ENCODE measurements at regions of chr13 and their contacts with region 1.

Region 1: GRCh38 chr13:25114220-25114619 is 18.3 kb downstream of the PABPC3 start:
- DNase-seq: peak; percentile 37 to 65
- ATAC-seq: peak; percentile 92 to 95
- H3K4me3 ChIP-seq: no peak overlapping the region
- H3K27ac ChIP-seq: no peak overlapping the region
- H3K4me1 ChIP-seq: no peaks in the 10 kb centered on the region
- CTCF ChIP-seq: peak; percentile 64
- EP300 ChIP-seq: no peak
- POLR2A ChIP-seq: no peak
- RAD21 ChIP-seq: peak; percentile 56 to 63

Region 2: GRCh38 chr13:24851545-24851944 is 262.7 kb before region 1 on chr13:
- CTCF ChIA-PET with region 1: no interaction called
- POLR2A ChIA-PET with region 1: no interaction called
- DNase-seq: no peak
- ATAC-seq: no peak
- H3K4me3 ChIP-seq: no peak overlapping the region
- H3K27ac ChIP-seq: no peak overlapping the region
- H3K4me1 ChIP-seq: no peaks in the 10 kb centered on the region
- CTCF ChIP-seq: no peak
- EP300 ChIP-seq: no peak
- POLR2A ChIP-seq: no peak
- RAD21 ChIP-seq: no peak

Region 3: GRCh38 chr13:24995226-24995804 is 118.9 kb before region 1 on chr13:
- CTCF ChIA-PET with region 1: interaction called, 17 read pairs
- POLR2A ChIA-PET with region 1: no interaction called
- DNase-seq: peak; percentile 56 to 85
- ATAC-seq: peak; percentile 87 to 98
- H3K4me3 ChIP-seq: no peak overlapping the region
- H3K27ac ChIP-seq: no peak overlapping the region
- H3K4me1 ChIP-seq: no peaks in the 10 kb centered on the region
- CTCF ChIP-seq: peak; percentile 66
- EP300 ChIP-seq: no peak
- POLR2A ChIP-seq: no peak
- RAD21 ChIP-seq: peak; percentile 61 to 73

Region 4: GRCh38 chr13:25001476-25002206 is 112.6 kb before region 1 on chr13:
- CTCF ChIA-PET with region 1: interaction called, 14 read pairs
- POLR2A ChIA-PET with region 1: no interaction called
- DNase-seq: peak in 1 of 2 experiments; percentile 26
- ATAC-seq: peak; percentile 28 to 33; a peak in 2 of 6 replicates
- H3K4me3 ChIP-seq: no peak overlapping the region
- H3K27ac ChIP-seq: peak overlapping the region; percentile 51 to 65; a peak in 3 of 6 replicates
- H3K4me1 ChIP-seq: peaks cover 14% of the 10 kb centered on the region
- CTCF ChIP-seq: no peak
- EP300 ChIP-seq: no peak
- POLR2A ChIP-seq: no peak
- RAD21 ChIP-seq: no peak

Region 5: GRCh38 chr13:25085125-25085742 is 29.0 kb before region 1 on chr13:
- CTCF ChIA-PET with region 1: interaction called, 25 read pairs
- POLR2A ChIA-PET with region 1: no interaction called
- DNase-seq: peak; percentile 25 to 44
- ATAC-seq: peak; percentile 71 to 82; a peak in 4 of 6 replicates
- H3K4me3 ChIP-seq: no peak overlapping the region
- H3K27ac ChIP-seq: no peak overlapping the region
- H3K4me1 ChIP-seq: no peaks in the 10 kb centered on the region
- CTCF ChIP-seq: peak; percentile 52
- EP300 ChIP-seq: no peak
- POLR2A ChIP-seq: no peak
- RAD21 ChIP-seq: peak; percentile 49 to 53

Region 6: DNA sequence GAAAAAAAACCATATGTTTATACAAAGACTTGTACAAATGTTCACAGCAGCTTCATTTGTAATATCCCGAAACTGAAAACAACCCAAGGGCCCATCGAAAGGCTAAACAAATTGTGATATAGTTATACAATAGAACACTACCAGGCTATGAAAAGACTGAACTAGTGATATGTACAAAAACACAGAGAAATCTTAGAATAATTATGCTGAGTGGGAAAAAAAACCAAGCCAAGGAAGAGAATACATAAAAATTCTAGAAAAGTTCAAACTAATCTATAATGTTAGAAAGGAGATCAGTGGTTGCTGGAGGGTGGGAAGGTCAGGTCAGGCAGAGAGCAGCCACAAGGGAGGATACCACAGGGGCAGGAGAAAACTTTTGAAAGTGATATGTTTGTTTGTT is 10.5 kb before region 1 on chr13:
- CTCF ChIA-PET with region 1: interaction called, 12 read pairs
- POLR2A ChIA-PET with region 1: no interaction called
- DNase-seq: no peak
- ATAC-seq: no peak
- H3K4me3 ChIP-seq: no peak overlapping the region
- H3K27ac ChIP-seq: no peak overlapping the region
- H3K4me1 ChIP-seq: no peaks in the 10 kb centered on the region
- CTCF ChIP-seq: no peak
- EP300 ChIP-seq: no peak
- POLR2A ChIP-seq: no peak
- RAD21 ChIP-seq: no peak